ENCODE measurements at regions of chr1 and their contacts with region 1.

Region 1: DNA sequence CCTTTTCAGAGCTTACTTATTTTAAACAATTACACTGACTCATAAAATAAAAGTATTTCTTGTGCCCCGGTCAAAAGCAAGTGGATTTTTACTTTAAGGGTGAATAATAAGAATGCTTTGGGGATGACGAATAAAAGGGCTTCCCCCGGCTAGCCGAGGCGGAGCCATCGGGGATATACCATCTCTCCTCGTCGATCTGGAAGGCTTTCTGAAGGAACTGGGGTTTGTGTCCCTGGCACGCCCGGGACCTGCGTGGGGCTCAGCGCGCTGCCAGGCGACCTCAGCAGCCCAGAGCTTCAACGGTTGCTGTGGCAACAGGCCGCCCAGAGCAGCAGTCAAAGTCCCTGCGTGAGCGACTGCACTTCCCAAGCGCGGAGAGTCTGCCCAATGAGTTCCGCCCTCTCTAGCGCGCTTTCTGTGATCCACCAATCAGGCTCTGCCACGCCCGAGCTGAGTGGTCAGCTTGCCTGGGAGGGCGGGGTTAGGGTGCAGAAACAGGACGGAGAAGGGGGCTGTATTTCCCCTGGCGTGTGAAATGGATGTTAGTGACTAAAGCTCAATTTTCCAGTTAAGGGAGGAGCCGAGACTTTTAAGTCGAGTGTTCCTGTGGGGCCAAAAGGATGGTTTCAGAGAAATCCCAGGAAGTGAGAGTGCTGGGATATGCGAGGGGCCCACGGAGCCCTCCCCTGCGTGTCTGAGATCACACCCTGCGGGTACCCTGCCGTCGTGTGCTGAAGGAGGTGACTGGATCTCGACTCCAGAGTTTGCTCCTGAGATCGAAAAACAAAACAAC is 33.0 kb upstream of the MGST3 start:
- DNase-seq: peak; percentile 87 to 92 (median 87)
- H3K4me3 ChIP-seq: peak overlapping the region; percentile 68
- H3K4me3 Mint-ChIP-seq: peak overlapping the region; percentile 84 to 95 (median 91)
- H3K27ac ChIP-seq: peak overlapping the region; percentile 71
- H3K27ac Mint-ChIP-seq: peak overlapping the region; percentile 73 to 99 (median 94)
- H3K4me1 ChIP-seq: peaks cover 14% of the 10 kb centered on the region
- H3K4me1 Mint-ChIP-seq: peaks cover 18 to 27% (median 23%) of the 10 kb centered on the region in 3 donors
- H3K27me3 ChIP-seq: peaks cover 7% of the 10 kb centered on the region
- H3K27me3 Mint-ChIP-seq: peaks cover 14 to 31% of the 10 kb centered on the region in 2 donors

Region 2: GRCh38 chr1:165367375-165367993 is 230.6 kb before region 1 on chr1:
- CTCF ChIA-PET with region 1: interaction called, 13 read pairs
- POLR2A ChIA-PET with region 1: no interaction called
- DNase-seq: peak; percentile 51 to 81 (median 74)
- H3K4me3 ChIP-seq: no peak overlapping the region
- H3K4me3 Mint-ChIP-seq: no peak overlapping the region
- H3K27ac ChIP-seq: no peak overlapping the region
- H3K27ac Mint-ChIP-seq: no peak overlapping the region
- H3K4me1 ChIP-seq: no peaks in the 10 kb centered on the region
- H3K4me1 Mint-ChIP-seq: peaks cover 0 to 3% (median 0%) of the 10 kb centered on the region in 3 donors
- H3K27me3 ChIP-seq: peaks cover 3% of the 10 kb centered on the region
- H3K27me3 Mint-ChIP-seq: peaks cover 29 to 78% of the 10 kb centered on the region in 2 donors

Region 3: GRCh38 chr1:165392634-165393571 is 205.2 kb before region 1 on chr1:
- CTCF ChIA-PET with region 1: interaction called, 276 read pairs
- POLR2A ChIA-PET with region 1: no interaction called
- DNase-seq: peak; percentile 85 to 94 (median 89)
- H3K4me3 ChIP-seq: peak overlapping the region; percentile 5
- H3K4me3 Mint-ChIP-seq: peak overlapping the region; percentile 55 to 84 (median 79)
- H3K27ac ChIP-seq: no peak overlapping the region
- H3K27ac Mint-ChIP-seq: peak overlapping the region in 7 of 8 donors; percentile 59 to 95 (median 81)
- H3K4me1 ChIP-seq: peaks cover 16% of the 10 kb centered on the region
- H3K4me1 Mint-ChIP-seq: peaks cover 11 to 19% (median 15%) of the 10 kb centered on the region in 3 donors
- H3K27me3 ChIP-seq: peaks cover 7% of the 10 kb centered on the region
- H3K27me3 Mint-ChIP-seq: peaks cover 25 to 71% of the 10 kb centered on the region in 2 donors

Region 4: GRCh38 chr1:165763442-165763841 is 165.4 kb after region 1 on chr1:
- CTCF ChIA-PET with region 1: no interaction called
- POLR2A ChIA-PET with region 1: no interaction called
- DNase-seq: no peak
- H3K4me3 ChIP-seq: no peak overlapping the region
- H3K4me3 Mint-ChIP-seq: peak overlapping the region in 2 of 7 donors; percentile 6 to 24
- H3K27ac ChIP-seq: no peak overlapping the region
- H3K27ac Mint-ChIP-seq: peak overlapping the region in 3 of 8 donors; percentile 13 to 66 (median 30)
- H3K4me1 ChIP-seq: peaks cover 42% of the 10 kb centered on the region
- H3K4me1 Mint-ChIP-seq: peaks cover 58 to 85% (median 79%) of the 10 kb centered on the region in 3 donors
- H3K27me3 ChIP-seq: no peaks in the 10 kb centered on the region
- H3K27me3 Mint-ChIP-seq: peaks cover 0 to 2% of the 10 kb centered on the region in 2 donors

Region 5: GRCh38 chr1:165914136-165914798 is 316.2 kb after region 1 on chr1:
- CTCF ChIA-PET with region 1: interaction called, 116 read pairs
- POLR2A ChIA-PET with region 1: no interaction called
- DNase-seq: peak; percentile 31 to 72 (median 59)
- H3K4me3 ChIP-seq: no peak overlapping the region
- H3K4me3 Mint-ChIP-seq: no peak overlapping the region
- H3K27ac ChIP-seq: no peak overlapping the region
- H3K27ac Mint-ChIP-seq: no peak overlapping the region
- H3K4me1 ChIP-seq: no peaks in the 10 kb centered on the region
- H3K4me1 Mint-ChIP-seq: peaks cover 0 to 4% (median 3%) of the 10 kb centered on the region in 3 donors
- H3K27me3 ChIP-seq: no peaks in the 10 kb centered on the region
- H3K27me3 Mint-ChIP-seq: no peaks in the 10 kb centered on the region

Region 6: GRCh38 chr1:165924117-165924516 is 326.0 kb after region 1 on chr1:
- CTCF ChIA-PET with region 1: interaction called, 11 read pairs
- POLR2A ChIA-PET with region 1: no interaction called
- DNase-seq: no peak
- H3K4me3 ChIP-seq: no peak overlapping the region
- H3K4me3 Mint-ChIP-seq: no peak overlapping the region
- H3K27ac ChIP-seq: no peak overlapping the region
- H3K27ac Mint-ChIP-seq: no peak overlapping the region
- H3K4me1 ChIP-seq: no peaks in the 10 kb centered on the region
- H3K4me1 Mint-ChIP-seq: no peaks in the 10 kb centered on the region
- H3K27me3 ChIP-seq: no peaks in the 10 kb centered on the region
- H3K27me3 Mint-ChIP-seq: peaks cover 19 to 37% of the 10 kb centered on the region in 2 donors

Measured in CD8-positive, alpha-beta memory T cell (primary cell).